Lower leg skin (tissue), 4 donors: ENCODE measurements at regions of chr17 and their contacts with region 1.

Region 1: GRCh38 chr17:46995841-46996571 is 17.0 kb upstream of the RPRML start:
- DNase-seq: no peak
- H3K4me3 ChIP-seq: no peak overlapping the region
- CTCF ChIP-seq: no peak
- POLR2A ChIP-seq: no peak

Region 2: GRCh38 chr17:46940621-46941404 is 55.2 kb before region 1 on chr17:
- intact Hi-C with region 1: loop called (anchors 10 kb)
- DNase-seq: peak; percentile 67 to 93
- H3K4me3 ChIP-seq: no peak overlapping the region
- CTCF ChIP-seq: peak in 1 of 3 donors; percentile 29
- POLR2A ChIP-seq: no peak